GM12878 (cell line): ENCODE measurements at regions of chr21 and their contacts with region 1.

Region 1: GRCh38 chr21:15592271-15592860 is 137.4 kb upstream of the USP25 start:
- DNase-seq: no peak
- ATAC-seq: no peak
- H3K4me3 ChIP-seq: no peak overlapping the region
- H3K27ac ChIP-seq: no peak overlapping the region
- H3K4me1 ChIP-seq: no peaks in the 10 kb centered on the region
- H3K27me3 ChIP-seq: no peaks in the 10 kb centered on the region
- CTCF ChIP-seq: peak; percentile 35 to 66 (median 51); a peak in 5 of 6 replicates
- EP300 ChIP-seq: no peak
- POLR2A ChIP-seq: no peak
- RAD21 ChIP-seq: peak; percentile 88

Region 2: DNA sequence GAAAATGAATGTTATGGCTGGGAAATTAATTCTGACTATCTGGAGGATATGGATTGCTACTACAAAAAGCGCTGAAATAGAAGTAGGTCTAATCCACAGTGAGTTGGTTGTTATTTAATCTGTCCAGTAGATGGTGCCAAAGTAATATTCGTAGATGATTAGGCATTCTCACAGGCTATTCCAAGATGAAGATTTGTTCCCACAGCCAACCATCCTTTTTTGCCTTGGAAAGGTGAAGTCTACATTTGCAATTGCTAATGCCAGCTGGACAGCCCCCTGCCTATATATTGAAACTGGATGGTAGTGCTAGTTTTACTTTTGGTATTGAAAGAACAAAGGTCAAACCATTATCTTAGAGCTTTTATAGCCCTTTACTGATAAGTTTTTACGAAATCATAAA is 1332.6 kb before region 1 on chr21:
- CTCF ChIA-PET with region 1: no interaction called
- POLR2A ChIA-PET with region 1: no interaction called
- RAD21 ChIA-PET with region 1: no interaction called
- SMC1A ChIA-PET with region 1: interaction called, 4 read pairs
- in situ Hi-C with region 1: loop called (anchors 10 kb)
- intact Hi-C with region 1: loop called (anchors 2 kb)
- DNase-seq: no peak
- ATAC-seq: peak; percentile 76
- H3K4me3 ChIP-seq: no peak overlapping the region
- H3K27ac ChIP-seq: no peak overlapping the region
- H3K4me1 ChIP-seq: no peaks in the 10 kb centered on the region
- H3K27me3 ChIP-seq: no peaks in the 10 kb centered on the region; a peak in 1 of 4 replicates
- CTCF ChIP-seq: peak; percentile 35 to 56 (median 50); a peak in 4 of 6 replicates
- EP300 ChIP-seq: no peak
- POLR2A ChIP-seq: no peak
- RAD21 ChIP-seq: peak; percentile 69

Region 3: DNA sequence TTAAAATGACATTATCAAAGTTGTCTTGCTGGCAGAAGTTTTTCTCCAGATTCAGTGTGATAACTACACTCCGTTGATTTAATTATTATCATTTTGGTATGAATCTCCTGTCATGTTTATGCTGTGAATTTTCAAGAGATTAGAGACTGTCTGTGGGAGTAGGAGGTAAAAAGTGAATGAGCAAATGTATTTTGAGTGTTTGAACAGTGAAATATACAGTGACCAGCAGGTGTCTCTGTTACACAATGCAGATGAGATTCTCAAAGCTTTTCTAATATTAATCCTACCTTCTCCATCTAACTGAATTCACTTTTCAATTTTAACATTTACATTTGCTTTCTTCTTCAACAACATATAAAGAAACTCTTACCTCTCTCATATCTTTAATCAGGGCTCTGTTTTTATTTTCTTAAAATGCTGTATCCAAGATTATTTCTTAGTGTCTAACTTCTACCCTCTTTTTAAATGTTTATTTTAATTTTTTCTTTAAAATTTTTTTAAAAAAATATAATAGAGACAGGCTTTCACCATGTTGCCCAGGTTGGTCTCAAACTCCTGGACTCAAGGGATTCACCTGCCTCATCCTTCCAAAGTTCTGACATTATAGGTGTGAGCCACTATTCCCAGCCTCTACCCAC is 1188.6 kb before region 1 on chr21:
- CTCF ChIA-PET with region 1: interaction called, 5 read pairs
- POLR2A ChIA-PET with region 1: no interaction called
- RAD21 ChIA-PET with region 1: no interaction called
- SMC1A ChIA-PET with region 1: no interaction called
- in situ Hi-C with region 1: loop called (anchors 25 kb)
- intact Hi-C with region 1: loop called (anchors 5 kb)
- DNase-seq: peak; percentile 9
- ATAC-seq: peak; percentile 78
- H3K4me3 ChIP-seq: no peak overlapping the region
- H3K27ac ChIP-seq: no peak overlapping the region
- H3K4me1 ChIP-seq: no peaks in the 10 kb centered on the region
- H3K27me3 ChIP-seq: no peaks in the 10 kb centered on the region
- CTCF ChIP-seq: peak; percentile 42 to 72 (median 60); a peak in 5 of 6 replicates
- EP300 ChIP-seq: no peak
- POLR2A ChIP-seq: no peak
- RAD21 ChIP-seq: peak; percentile 83

Region 4: DNA sequence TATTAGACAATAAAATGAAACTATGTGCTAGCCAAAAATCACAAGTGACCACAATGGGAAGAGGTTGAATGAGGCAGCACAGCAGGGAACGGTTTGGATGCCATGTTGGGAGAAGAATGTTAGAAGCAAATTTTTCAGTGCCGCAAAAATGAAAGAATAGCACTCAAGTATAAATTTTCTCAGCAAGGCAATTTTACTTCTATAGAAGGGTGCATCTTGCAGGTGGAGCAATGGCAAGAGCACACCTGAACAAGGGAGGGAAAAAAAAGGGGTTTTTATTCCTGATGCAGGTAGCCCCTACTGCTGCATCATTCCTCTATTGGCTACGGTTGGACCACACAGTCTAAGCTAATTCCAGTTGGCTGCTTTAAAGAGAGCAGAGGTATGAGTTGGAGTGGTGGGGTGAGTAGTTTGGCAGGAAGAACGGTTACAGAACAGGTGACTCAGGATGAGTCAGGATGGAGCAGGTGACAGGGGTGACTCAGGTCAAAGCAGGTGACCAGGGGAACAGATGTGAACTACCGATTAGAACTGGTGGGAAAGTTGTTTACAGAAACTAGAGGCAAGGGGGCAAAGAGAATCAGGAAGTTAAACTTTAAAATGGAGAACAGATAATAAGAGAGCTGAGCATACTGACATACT is 226.5 kb before region 1 on chr21:
- CTCF ChIA-PET with region 1: no interaction called
- POLR2A ChIA-PET with region 1: no interaction called
- RAD21 ChIA-PET with region 1: no interaction called
- SMC1A ChIA-PET with region 1: no interaction called
- in situ Hi-C with region 1: no loop called
- intact Hi-C with region 1: no loop called
- DNase-seq: no peak
- ATAC-seq: no peak
- H3K4me3 ChIP-seq: no peak overlapping the region
- H3K27ac ChIP-seq: no peak overlapping the region
- H3K4me1 ChIP-seq: no peaks in the 10 kb centered on the region
- H3K27me3 ChIP-seq: no peaks in the 10 kb centered on the region
- CTCF ChIP-seq: no peak
- EP300 ChIP-seq: no peak
- POLR2A ChIP-seq: no peak
- RAD21 ChIP-seq: no peak

Region 5: DNA sequence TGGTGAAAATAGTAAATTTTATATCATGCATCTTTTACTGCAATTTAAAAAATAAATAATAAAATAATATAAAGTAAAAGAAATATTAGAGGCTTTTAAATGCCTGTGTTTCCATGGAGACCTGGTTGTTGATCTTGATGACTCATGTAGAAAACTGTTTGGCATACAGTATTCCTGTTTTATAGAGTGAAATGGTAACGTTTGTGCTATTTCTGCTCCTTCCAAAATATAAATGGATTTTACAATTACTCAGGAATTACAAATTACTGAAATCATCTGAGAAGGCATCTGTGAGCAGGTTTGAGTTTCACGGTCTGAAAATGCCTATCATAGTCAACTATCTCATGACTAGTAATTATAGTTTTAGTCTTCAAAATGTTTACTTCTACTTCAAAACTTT is 39.0 kb after region 1 on chr21:
- CTCF ChIA-PET with region 1: no interaction called
- POLR2A ChIA-PET with region 1: no interaction called
- RAD21 ChIA-PET with region 1: no interaction called
- SMC1A ChIA-PET with region 1: no interaction called
- in situ Hi-C with region 1: no loop called
- intact Hi-C with region 1: no loop called
- DNase-seq: no peak
- ATAC-seq: no peak
- H3K4me3 ChIP-seq: no peak overlapping the region
- H3K27ac ChIP-seq: no peak overlapping the region
- H3K4me1 ChIP-seq: no peaks in the 10 kb centered on the region
- H3K27me3 ChIP-seq: no peaks in the 10 kb centered on the region; a peak in 1 of 4 replicates
- CTCF ChIP-seq: no peak
- EP300 ChIP-seq: no peak
- POLR2A ChIP-seq: no peak
- RAD21 ChIP-seq: no peak